PC-3 (cell line): ENCODE measurements at regions of chr10 and their contacts with region 1.

Region 1: GRCh38 chr10:79463578-79464496 is 18.4 kb upstream of the ZCCHC24 start:
- DNase-seq: no peak
- ATAC-seq: no peak
- H3K4me3 ChIP-seq: no peak overlapping the region
- H3K27ac ChIP-seq: no peak overlapping the region
- H3K4me1 ChIP-seq: no peaks in the 10 kb centered on the region
- H3K27me3 ChIP-seq: no peaks in the 10 kb centered on the region
- CTCF ChIP-seq: no peak

Region 2: GRCh38 chr10:79162861-79163665 is 300.8 kb before region 1 on chr10:
- CTCF ChIA-PET with region 1: interaction called, 17 read pairs
- POLR2A ChIA-PET with region 1: no interaction called
- intact Hi-C with region 1: no loop called
- DNase-seq: peak; percentile 100
- ATAC-seq: peak; percentile 51
- H3K4me3 ChIP-seq: no peak overlapping the region
- H3K27ac ChIP-seq: peak overlapping the region; percentile 4; the same call in 1 of the 2 replicates
- H3K4me1 ChIP-seq: peaks cover 39% of the 10 kb centered on the region
- H3K27me3 ChIP-seq: no peaks in the 10 kb centered on the region
- CTCF ChIP-seq: no peak

Region 3: GRCh38 chr10:79400146-79401004 is 63.5 kb before region 1 on chr10:
- CTCF ChIA-PET with region 1: interaction called, 8 read pairs
- POLR2A ChIA-PET with region 1: interaction called, 7 read pairs
- intact Hi-C with region 1: loop called (anchors 1 kb)
- DNase-seq: peak; percentile 97
- ATAC-seq: peak; percentile 57
- H3K4me3 ChIP-seq: no peak overlapping the region
- H3K27ac ChIP-seq: no peak overlapping the region
- H3K4me1 ChIP-seq: peaks cover 23% of the 10 kb centered on the region
- H3K27me3 ChIP-seq: no peaks in the 10 kb centered on the region
- CTCF ChIP-seq: peak; percentile 100

Region 4: GRCh38 chr10:79411546-79412495 is 52.0 kb before region 1 on chr10:
- CTCF ChIA-PET with region 1: no interaction called
- POLR2A ChIA-PET with region 1: no interaction called
- intact Hi-C with region 1: no loop called
- DNase-seq: no peak
- ATAC-seq: no peak
- H3K4me3 ChIP-seq: no peak overlapping the region
- H3K27ac ChIP-seq: no peak overlapping the region
- H3K4me1 ChIP-seq: peaks cover 21% of the 10 kb centered on the region
- H3K27me3 ChIP-seq: no peaks in the 10 kb centered on the region
- CTCF ChIP-seq: no peak

Region 5: DNA sequence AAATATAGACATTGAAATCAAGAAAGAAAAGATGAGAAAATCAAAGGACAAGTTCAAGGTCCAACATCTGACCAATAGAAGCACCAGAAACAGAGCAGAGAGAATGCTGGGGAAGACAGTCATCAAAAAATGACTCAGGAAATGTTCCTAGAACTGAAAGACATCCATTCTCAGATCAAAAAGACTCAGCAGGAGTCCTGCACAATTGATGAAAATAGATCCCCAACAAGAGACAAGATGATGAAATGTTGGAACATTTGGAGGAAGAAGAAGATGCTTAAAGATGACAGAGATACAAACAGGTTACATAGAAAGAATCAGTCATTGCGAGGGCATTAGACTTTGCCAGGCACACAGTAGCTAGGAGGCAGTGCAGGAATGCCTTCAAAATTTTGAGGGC is 18.5 kb after region 1 on chr10:
- CTCF ChIA-PET with region 1: interaction called, 10 read pairs
- POLR2A ChIA-PET with region 1: no interaction called
- intact Hi-C with region 1: loop called (anchors 1 kb)
- DNase-seq: no peak
- ATAC-seq: no peak
- H3K4me3 ChIP-seq: no peak overlapping the region
- H3K27ac ChIP-seq: no peak overlapping the region
- H3K4me1 ChIP-seq: no peaks in the 10 kb centered on the region
- H3K27me3 ChIP-seq: no peaks in the 10 kb centered on the region
- CTCF ChIP-seq: 0 out of 2 replicates have a peak, but pooled peaks have one; percentile 12

Region 6: GRCh38 chr10:79487296-79488194 is 23.7 kb after region 1 on chr10:
- CTCF ChIA-PET with region 1: interaction called, 4 read pairs
- POLR2A ChIA-PET with region 1: no interaction called
- intact Hi-C with region 1: loop called (anchors 1 kb)
- DNase-seq: peak; percentile 97
- ATAC-seq: peak; percentile 69
- H3K4me3 ChIP-seq: no peak overlapping the region
- H3K27ac ChIP-seq: peak overlapping the region; percentile 30
- H3K4me1 ChIP-seq: peaks cover 24% of the 10 kb centered on the region
- H3K27me3 ChIP-seq: no peaks in the 10 kb centered on the region
- CTCF ChIP-seq: peak; percentile 99

Region 7: DNA sequence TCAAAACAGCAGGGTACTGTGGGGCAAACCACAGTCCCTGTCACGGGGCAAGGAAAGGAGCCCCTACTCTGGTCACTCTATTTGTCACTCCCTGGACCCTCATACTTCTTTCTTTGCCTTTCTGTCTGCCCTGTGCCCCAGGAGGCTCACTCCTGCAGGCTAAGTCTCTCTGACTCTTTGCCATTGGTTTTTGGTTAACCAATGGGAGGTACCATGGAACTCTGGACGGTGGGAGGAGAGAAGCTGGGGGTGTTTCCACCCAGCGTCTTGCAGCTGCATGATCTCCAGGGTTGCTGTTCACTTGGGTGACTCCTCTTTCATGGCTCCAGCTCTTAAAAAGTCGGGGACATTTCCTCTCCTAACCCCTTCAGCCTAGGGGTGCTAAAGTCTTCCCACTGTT is 33.1 kb after region 1 on chr10:
- CTCF ChIA-PET with region 1: interaction called, 15 read pairs
- POLR2A ChIA-PET with region 1: no interaction called
- intact Hi-C with region 1: loop called (anchors 1 kb)
- DNase-seq: no peak
- ATAC-seq: no peak; the same call in 1 of the 2 replicates
- H3K4me3 ChIP-seq: no peak overlapping the region
- H3K27ac ChIP-seq: no peak overlapping the region
- H3K4me1 ChIP-seq: no peaks in the 10 kb centered on the region
- H3K27me3 ChIP-seq: peaks cover 23% of the 10 kb centered on the region
- CTCF ChIP-seq: no peak

Region 8: DNA sequence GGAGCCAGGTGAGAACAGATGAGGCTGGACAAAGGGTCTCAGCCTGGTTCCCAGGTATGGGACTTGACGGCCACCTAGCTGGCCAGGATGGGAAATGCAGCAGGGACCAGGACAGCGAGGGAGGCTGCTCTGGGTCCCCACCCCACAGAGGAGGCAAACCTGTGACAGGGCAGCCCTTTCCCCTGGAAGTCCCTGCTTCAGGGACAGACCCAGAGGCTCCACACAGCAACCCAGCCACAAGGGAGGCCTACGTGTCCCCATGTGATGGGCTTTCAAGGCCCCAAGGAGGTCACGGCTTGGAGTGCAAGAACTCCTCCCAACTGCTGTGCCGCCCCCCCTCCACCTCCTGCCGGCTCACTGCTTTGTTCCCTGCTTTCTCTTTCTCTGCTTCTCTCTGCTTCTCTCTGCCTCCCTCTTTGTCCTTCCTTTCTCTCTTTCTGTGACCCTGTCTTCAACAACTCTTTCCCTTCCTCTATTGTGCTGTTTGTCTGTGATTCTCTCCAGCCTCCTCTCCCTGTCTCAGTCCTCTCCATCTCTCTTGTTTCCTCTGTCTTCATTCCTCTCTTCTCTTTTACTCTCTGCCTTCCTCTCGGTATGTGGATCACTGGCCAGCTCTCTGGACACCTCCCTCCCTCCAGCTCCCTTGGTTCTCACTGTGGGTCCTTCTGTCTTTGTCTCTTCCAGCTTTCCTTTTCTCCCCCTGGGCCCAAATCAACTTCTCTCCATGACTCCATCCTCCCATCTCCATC is 38.9 kb after region 1 on chr10:
- CTCF ChIA-PET with region 1: interaction called, 6 read pairs
- POLR2A ChIA-PET with region 1: no interaction called
- intact Hi-C with region 1: loop called (anchors 1 kb)
- DNase-seq: peak; percentile 96
- ATAC-seq: peak; percentile 98
- H3K4me3 ChIP-seq: peak overlapping the region; percentile 8; the same call in 1 of the 2 replicates
- H3K27ac ChIP-seq: no peak overlapping the region
- H3K4me1 ChIP-seq: peaks cover 1% of the 10 kb centered on the region; the same call in 1 of the 2 replicates
- H3K27me3 ChIP-seq: peaks cover 12% of the 10 kb centered on the region; the same call in 1 of the 2 replicates
- CTCF ChIP-seq: peak; percentile 96

Region 9: DNA sequence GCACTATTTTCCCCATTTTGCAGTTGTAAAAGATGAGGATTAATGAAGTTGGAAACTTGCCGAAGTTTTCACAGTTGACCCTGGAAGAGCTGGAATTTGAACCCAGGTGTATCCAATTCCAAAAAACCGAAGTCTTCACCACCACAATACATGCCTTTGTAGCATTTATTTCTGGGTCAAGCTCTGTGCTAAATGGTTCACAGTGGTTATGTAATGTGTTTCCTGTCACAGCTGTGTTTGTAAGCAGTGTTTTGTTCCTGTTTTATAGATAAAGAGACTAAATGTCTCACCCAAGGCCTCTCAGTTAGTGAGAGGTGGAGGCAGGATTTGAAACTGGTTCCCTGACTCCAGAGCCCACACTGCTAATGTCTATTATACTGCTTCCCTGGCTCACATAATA is 78.8 kb after region 1 on chr10:
- CTCF ChIA-PET with region 1: no interaction called
- POLR2A ChIA-PET with region 1: no interaction called
- intact Hi-C with region 1: no loop called
- DNase-seq: no peak
- ATAC-seq: no peak
- H3K4me3 ChIP-seq: no peak overlapping the region
- H3K27ac ChIP-seq: no peak overlapping the region
- H3K4me1 ChIP-seq: no peaks in the 10 kb centered on the region
- H3K27me3 ChIP-seq: no peaks in the 10 kb centered on the region
- CTCF ChIP-seq: no peak